A549 (cell line): ENCODE measurements at regions of chr12 and their contacts with region 1.

Region 1: DNA sequence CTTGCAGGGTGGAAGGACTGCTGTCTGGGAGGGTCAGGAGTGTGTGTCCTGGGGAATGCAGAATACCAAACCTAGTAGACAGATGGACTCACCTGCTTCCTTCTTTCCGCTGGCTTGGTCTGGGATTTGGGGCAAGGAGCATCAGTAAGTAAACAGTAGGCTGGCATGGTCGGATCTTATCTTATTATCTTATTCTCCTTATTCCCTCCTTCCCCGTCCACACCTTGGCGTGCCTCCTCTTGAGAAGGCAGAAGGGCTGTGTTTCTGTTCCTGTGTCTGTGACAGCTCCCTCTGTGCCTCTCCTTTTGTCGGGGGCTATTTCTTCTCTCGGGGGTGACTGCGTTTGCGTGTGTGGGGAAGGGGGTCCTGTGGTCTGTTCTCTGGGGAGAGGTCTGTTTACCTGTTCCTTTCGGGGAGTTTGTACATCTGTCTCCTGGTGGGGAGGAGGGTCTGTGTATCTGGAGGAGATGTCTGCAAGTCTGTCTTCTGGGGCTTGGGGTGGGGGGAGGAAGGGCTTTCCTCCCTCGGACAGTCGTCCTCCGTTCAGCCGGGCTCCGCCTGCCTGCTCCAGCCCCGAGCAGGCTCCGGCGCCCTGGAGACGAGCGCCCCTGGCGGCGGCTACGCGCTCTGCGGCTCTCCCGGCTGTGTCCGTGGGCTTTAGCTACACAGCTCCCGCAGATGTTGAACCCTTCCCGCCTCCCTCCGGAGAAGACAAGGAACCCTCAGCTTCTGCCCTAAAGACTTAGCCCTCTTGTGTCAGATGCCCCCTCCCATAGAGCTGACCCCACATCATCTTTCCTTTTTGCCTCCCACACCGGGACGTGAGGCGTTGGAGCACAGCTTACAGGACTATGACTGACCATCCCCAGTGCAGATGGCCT is 4.3 kb downstream of the KRT86 start:
- DNase-seq: peak; percentile 87 to 92
- ATAC-seq: peak; percentile 31 to 49
- H3K4me3 ChIP-seq: peak overlapping the region; percentile 33; the same call in 2 of the 3 replicates
- H3K27ac ChIP-seq: peak overlapping the region; percentile 96 to 100
- H3K4me1 ChIP-seq: peaks cover 67% of the 10 kb centered on the region
- CTCF ChIP-seq: peak; percentile 96
- EP300 ChIP-seq: no peak
- POLR2A ChIP-seq: no peak
- RAD21 ChIP-seq: peak; percentile 85 to 89

Region 2: DNA sequence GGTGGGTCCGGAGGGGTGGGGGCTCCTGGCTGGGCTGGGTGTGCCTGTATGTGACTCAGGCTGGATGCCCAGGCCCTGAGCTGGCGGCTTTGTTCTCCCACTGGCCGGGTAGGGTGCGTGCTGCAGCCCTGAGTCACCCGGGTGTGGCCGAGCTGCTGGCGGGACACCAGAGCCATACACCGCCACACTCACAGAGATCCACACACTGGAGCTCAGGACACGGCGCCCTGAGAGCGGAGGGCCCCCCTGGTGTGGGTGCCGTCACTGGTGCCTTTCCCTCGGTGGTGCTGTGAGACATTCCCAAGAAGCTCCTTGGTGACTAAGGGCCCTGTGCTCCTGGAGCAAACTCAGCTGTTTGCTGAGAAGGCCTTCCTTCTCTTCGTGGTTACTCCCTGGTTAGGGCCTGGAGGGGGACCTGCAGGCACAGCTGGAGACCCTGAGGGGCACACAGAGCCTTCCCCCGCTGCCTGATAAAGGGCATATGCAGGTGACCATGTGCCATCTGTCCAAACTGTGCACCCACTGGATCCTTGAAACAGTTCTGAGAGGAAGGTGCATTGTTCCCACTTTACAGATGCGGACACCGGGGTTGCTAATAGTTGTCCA is 131.3 kb before region 1 on chr12:
- CTCF ChIA-PET with region 1: interaction called, 35 read pairs
- POLR2A ChIA-PET with region 1: interaction called, 75 read pairs
- DNase-seq: peak; percentile 96 to 100
- ATAC-seq: peak; percentile 46 to 71
- H3K4me3 ChIP-seq: no peak overlapping the region
- H3K27ac ChIP-seq: peak overlapping the region; percentile 100
- H3K4me1 ChIP-seq: peaks cover 93% of the 10 kb centered on the region
- CTCF ChIP-seq: no peak
- EP300 ChIP-seq: peak; percentile 97 to 99
- POLR2A ChIP-seq: no peak
- RAD21 ChIP-seq: peak in 1 of 2 experiments; percentile 42; a peak in 3 of 5 replicates

Region 3: GRCh38 chr12:52186145-52186840 is 92.5 kb before region 1 on chr12:
- CTCF ChIA-PET with region 1: interaction called, 12 read pairs
- POLR2A ChIA-PET with region 1: interaction called, 22 read pairs
- DNase-seq: no peak
- ATAC-seq: peak in 1 of 2 experiments; percentile 6; a peak in 3 of 6 replicates
- H3K4me3 ChIP-seq: no peak overlapping the region
- H3K27ac ChIP-seq: peak overlapping the region; percentile 23 to 96
- H3K4me1 ChIP-seq: peaks cover 90% of the 10 kb centered on the region
- CTCF ChIP-seq: no peak
- EP300 ChIP-seq: no peak
- POLR2A ChIP-seq: no peak
- RAD21 ChIP-seq: no peak

Region 4: DNA sequence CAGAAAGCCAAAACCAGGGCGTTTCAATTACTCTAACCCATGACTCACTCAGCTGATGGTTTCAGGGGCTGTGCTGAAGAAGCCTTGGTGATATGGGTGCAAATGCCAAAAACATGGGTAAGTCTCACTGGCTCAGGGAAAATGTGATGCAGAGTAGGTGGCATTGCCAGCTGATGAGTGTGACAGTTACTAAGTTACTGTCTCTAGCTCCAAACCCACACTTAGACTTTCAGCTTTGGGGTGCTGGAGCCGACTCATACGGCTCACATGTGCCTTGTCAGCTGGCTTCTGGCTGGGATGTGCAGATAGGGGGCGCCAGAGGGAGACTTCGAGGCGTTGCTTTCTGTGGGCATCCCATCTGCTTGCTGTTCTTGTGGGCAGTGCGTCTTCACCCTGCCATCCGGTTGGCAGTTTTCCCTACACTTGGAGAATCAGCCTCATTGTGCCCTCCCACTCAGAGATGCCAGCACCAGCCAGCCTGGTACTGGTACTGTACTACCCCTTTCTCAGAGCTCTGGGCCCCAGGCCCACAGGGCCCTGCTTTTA is 56.8 kb before region 1 on chr12:
- CTCF ChIA-PET with region 1: interaction called, 19 read pairs
- POLR2A ChIA-PET with region 1: interaction called, 5 read pairs
- DNase-seq: peak in 1 of 2 experiments; percentile 90
- ATAC-seq: peak; percentile 91 to 97
- H3K4me3 ChIP-seq: no peak overlapping the region
- H3K27ac ChIP-seq: peak overlapping the region; percentile 82 to 90
- H3K4me1 ChIP-seq: peaks cover 62% of the 10 kb centered on the region
- CTCF ChIP-seq: peak; percentile 82
- EP300 ChIP-seq: no peak
- POLR2A ChIP-seq: no peak
- RAD21 ChIP-seq: peak; percentile 64 to 67

Region 5: GRCh38 chr12:52243856-52244614 is 34.7 kb before region 1 on chr12:
- CTCF ChIA-PET with region 1: interaction called, 321 read pairs
- POLR2A ChIA-PET with region 1: interaction called, 383 read pairs
- DNase-seq: peak; percentile 92 to 93
- ATAC-seq: peak; percentile 22 to 31
- H3K4me3 ChIP-seq: peak overlapping the region; percentile 24; the same call in 1 of the 3 replicates
- H3K27ac ChIP-seq: peak overlapping the region; percentile 92 to 97
- H3K4me1 ChIP-seq: peaks cover 100% of the 10 kb centered on the region
- CTCF ChIP-seq: no peak
- EP300 ChIP-seq: peak; percentile 55 to 80; a peak in 3 of 5 replicates
- POLR2A ChIP-seq: no peak
- RAD21 ChIP-seq: no peak; a peak in 2 of 5 replicates

Region 6: GRCh38 chr12:52870351-52871290 is 591.8 kb after region 1 on chr12:
- CTCF ChIA-PET with region 1: interaction called, 10 read pairs
- POLR2A ChIA-PET with region 1: interaction called, 18 read pairs
- DNase-seq: peak; percentile 83 to 86
- ATAC-seq: peak; percentile 33 to 71
- H3K4me3 ChIP-seq: no peak overlapping the region
- H3K27ac ChIP-seq: peak overlapping the region; percentile 94 to 97
- H3K4me1 ChIP-seq: peaks cover 80% of the 10 kb centered on the region
- CTCF ChIP-seq: peak; percentile 96
- EP300 ChIP-seq: no peak
- POLR2A ChIP-seq: no peak
- RAD21 ChIP-seq: peak; percentile 98 to 100